ENCODE measurements at regions of chr6 and their contacts with region 1.

Region 1: DNA sequence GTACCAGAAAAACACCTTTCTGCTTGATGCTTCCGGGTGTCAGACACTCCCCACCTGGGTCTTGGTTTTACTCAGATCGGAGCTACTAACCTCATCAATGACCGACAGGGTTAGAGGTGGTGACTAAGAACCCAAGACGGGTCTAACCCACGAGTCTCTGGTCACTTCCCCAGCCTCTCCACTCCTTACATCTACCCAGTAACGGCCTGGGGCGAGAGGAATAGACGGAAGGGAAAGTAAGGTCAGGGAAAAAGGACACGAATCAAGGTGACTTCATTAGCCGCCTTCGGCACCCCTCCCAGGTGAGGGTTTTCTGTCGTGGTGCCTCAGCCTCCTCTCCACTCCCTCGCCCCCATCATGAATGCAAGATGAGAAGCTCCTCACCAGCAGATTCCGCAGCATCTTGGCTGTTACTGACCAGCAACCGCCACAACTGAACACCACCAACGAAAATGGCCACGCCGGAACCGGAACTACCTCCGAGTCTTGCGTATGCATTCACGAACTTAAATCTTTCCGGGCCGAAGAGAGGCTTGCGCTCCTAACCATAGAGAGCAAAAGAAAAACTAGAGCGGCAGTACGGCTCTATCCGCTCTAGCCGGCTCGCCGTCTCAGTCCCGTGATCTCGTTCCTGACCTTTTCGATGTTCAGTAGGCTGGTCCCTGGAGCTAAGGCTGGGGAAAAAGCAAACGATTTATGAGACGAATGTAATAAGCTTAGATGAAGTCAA is at the start of gene COX7A2:
- DNase-seq: peak; percentile 98
- ATAC-seq: peak; percentile 97
- H3K4me3 ChIP-seq: peak within 1 kb of the TSS; percentile 81
- H3K27ac ChIP-seq: peak within 1 kb of the TSS; percentile 86
- H3K4me1 ChIP-seq: no peaks in the 10 kb centered on the region
- H3K27me3 ChIP-seq: no peaks in the 10 kb centered on the region
- CTCF ChIP-seq: no peak
- POLR2A ChIP-seq: peak; percentile 97
- RAD21 ChIP-seq: no peak
- total RNA-seq, gene COX7A2: 85.8 and 776 TPM in 2 replicates

Region 2: DNA sequence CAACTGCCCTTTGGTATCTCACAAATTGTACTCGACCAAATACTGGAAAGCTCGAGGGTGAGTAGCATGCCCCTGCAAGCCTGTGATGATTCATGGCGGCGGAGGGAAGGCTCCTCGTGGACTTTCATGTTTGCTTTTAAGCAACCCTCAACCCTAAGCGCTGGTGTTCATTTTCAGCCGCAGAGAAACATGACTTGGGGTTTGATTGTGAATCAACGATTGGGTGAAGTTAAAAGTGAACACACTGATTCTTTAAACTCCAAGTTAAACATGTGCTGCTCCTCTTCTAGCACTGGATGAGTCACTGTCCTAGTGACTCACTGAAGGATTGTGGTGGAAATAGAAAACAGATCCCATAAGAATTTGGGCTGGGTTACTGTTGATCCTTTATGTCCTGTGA is 1539.2 kb before region 1 on chr6:
- CTCF ChIA-PET with region 1: no interaction called
- POLR2A ChIA-PET with region 1: interaction called, 16 read pairs
- dilution Hi-C with region 1: no loop called
- in situ Hi-C with region 1: no loop called
- intact Hi-C with region 1: no loop called
- DNase-seq: peak; percentile 99
- ATAC-seq: peak; percentile 95
- H3K4me3 ChIP-seq: no peak overlapping the region; the same call in 1 of the 2 replicates
- H3K27ac ChIP-seq: peak overlapping the region; percentile 70
- H3K4me1 ChIP-seq: peaks cover 4% of the 10 kb centered on the region; the same call in 1 of the 2 replicates
- H3K27me3 ChIP-seq: no peaks in the 10 kb centered on the region
- CTCF ChIP-seq: no peak
- POLR2A ChIP-seq: no peak
- RAD21 ChIP-seq: no peak; the same call in 1 of the 2 replicates

Region 3: GRCh38 chr6:75275067-75275466 is 31.6 kb after region 1 on chr6:
- CTCF ChIA-PET with region 1: no interaction called
- POLR2A ChIA-PET with region 1: no interaction called
- dilution Hi-C with region 1: no loop called
- in situ Hi-C with region 1: no loop called
- intact Hi-C with region 1: no loop called
- DNase-seq: peak; percentile 97
- ATAC-seq: peak; percentile 88
- H3K4me3 ChIP-seq: no peak overlapping the region
- H3K27ac ChIP-seq: peak overlapping the region; percentile 18; the same call in 1 of the 2 replicates
- H3K4me1 ChIP-seq: peaks cover 24% of the 10 kb centered on the region
- H3K27me3 ChIP-seq: no peaks in the 10 kb centered on the region
- CTCF ChIP-seq: no peak
- POLR2A ChIP-seq: no peak
- RAD21 ChIP-seq: no peak

Measured in IMR-90 (cell line).